HepG2 (cell line): ENCODE measurements at regions of chr16 and their contacts with region 1.

Region 1: GRCh38 chr16:50806099-50807062 is 64.5 kb downstream of the CYLD start:
- DNase-seq: peak; percentile 88
- ATAC-seq: peak; percentile 82
- H3K4me3 ChIP-seq: peak overlapping the region; percentile 24 to 60 (median 39); a peak in 5 of 6 replicates
- H3K27ac ChIP-seq: peak overlapping the region; percentile 6
- H3K4me1 ChIP-seq: peaks cover 39% of the 10 kb centered on the region
- H3K27me3 ChIP-seq: no peaks in the 10 kb centered on the region
- CTCF ChIP-seq: peak; percentile 87
- EP300 ChIP-seq: no peak
- POLR2A ChIP-seq: no peak
- RAD21 ChIP-seq: peak; percentile 81

Region 2: DNA sequence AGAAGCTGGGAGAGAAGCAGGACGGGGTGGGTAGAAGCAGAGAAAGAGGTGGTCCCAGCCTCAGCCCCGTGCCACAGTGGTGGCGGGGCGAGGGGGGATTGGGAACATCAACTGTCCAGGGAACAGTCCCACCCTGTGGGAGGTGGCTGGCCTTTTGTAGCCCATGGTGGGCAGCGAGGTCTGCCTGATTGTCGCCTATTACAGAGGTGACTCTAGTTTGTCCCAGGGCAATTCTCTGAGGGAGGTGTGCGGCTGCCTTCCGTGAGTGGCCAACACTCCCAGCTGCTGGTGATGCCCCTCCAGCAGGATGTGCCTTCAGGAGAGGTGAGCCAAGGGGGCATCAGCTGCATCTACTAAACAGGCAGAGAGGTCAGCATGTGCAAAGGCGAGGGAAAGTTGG is 432.6 kb before region 1 on chr16:
- CTCF ChIA-PET with region 1: no interaction called
- POLR2A ChIA-PET with region 1: interaction called, 4 read pairs
- in situ Hi-C with region 1: loop called (anchors 5 kb)
- intact Hi-C with region 1: loop called (anchors 2 kb)
- DNase-seq: no peak
- ATAC-seq: no peak
- H3K4me3 ChIP-seq: no peak overlapping the region
- H3K27ac ChIP-seq: no peak overlapping the region
- H3K4me1 ChIP-seq: peaks cover 61% of the 10 kb centered on the region
- H3K27me3 ChIP-seq: no peaks in the 10 kb centered on the region
- CTCF ChIP-seq: no peak
- EP300 ChIP-seq: no peak
- POLR2A ChIP-seq: no peak
- RAD21 ChIP-seq: no peak

Region 3: GRCh38 chr16:50665128-50665878 is 141.1 kb before region 1 on chr16:
- CTCF ChIA-PET with region 1: interaction called, 20 read pairs
- POLR2A ChIA-PET with region 1: interaction called, 10 read pairs
- in situ Hi-C with region 1: loop called (anchors 5 kb)
- intact Hi-C with region 1: loop called (anchors 1 kb)
- DNase-seq: peak; percentile 59
- ATAC-seq: peak; percentile 69
- H3K4me3 ChIP-seq: peak overlapping the region; percentile 57 to 76 (median 69)
- H3K27ac ChIP-seq: no peak overlapping the region
- H3K4me1 ChIP-seq: peaks cover 39% of the 10 kb centered on the region
- H3K27me3 ChIP-seq: no peaks in the 10 kb centered on the region
- CTCF ChIP-seq: peak; percentile 91
- EP300 ChIP-seq: no peak
- POLR2A ChIP-seq: 0 out of 4 replicates have a peak, but pooled peaks of 1 of the 2 experiments have one; percentile 15
- RAD21 ChIP-seq: peak; percentile 92

Region 4: GRCh38 chr16:50671644-50672260 is 134.6 kb before region 1 on chr16:
- CTCF ChIA-PET with region 1: interaction called, 20 read pairs
- POLR2A ChIA-PET with region 1: interaction called, 8 read pairs
- in situ Hi-C with region 1: loop called (anchors 5 kb)
- intact Hi-C with region 1: loop called (anchors 1 kb)
- DNase-seq: peak; percentile 36
- ATAC-seq: no peak
- H3K4me3 ChIP-seq: no peak overlapping the region
- H3K27ac ChIP-seq: no peak overlapping the region
- H3K4me1 ChIP-seq: peaks cover 26% of the 10 kb centered on the region
- H3K27me3 ChIP-seq: no peaks in the 10 kb centered on the region; a peak in 1 of 5 replicates
- CTCF ChIP-seq: peak; percentile 67
- EP300 ChIP-seq: no peak
- POLR2A ChIP-seq: no peak
- RAD21 ChIP-seq: no peak

Region 5: DNA sequence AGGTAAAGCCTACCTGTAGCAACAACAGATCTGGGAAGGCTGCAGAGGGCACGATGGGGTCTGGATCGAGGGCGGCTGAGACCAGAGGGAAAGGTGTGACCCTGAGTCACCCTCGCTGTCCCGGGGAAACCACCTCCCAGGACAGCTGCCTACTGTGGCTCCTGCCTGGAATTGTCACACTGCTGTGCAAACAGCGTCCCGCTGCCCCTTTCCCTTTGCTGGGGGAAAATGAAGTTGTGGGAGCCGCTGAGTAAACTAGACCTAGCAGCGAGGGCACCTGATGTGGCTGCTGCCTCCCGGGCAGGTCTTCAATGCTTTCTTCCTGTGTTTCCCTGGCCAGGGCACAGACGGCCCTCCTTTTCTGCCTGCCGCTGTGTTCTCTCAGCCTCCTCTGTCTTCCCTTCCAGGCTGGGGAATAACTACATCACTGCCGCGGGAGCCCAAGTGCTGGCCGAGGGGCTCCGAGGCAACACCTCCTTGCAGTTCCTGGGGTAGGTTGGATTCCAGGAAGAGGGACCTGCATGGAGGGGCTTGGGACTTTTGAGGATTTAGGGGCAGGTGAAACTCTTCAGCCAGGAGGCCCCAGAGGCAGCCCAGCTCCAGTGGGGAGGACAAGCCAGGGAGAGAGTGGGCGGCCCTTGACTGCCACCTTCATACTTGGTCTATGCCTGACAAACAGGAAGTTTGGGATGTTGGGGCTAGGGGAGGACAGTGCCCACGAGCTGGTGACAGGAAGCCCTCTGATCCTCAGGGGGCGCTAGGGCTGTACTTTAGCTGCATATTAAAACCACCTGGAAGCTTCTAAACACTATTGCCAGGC is 86.7 kb before region 1 on chr16:
- CTCF ChIA-PET with region 1: interaction called, 16 read pairs
- POLR2A ChIA-PET with region 1: interaction called, 12 read pairs
- in situ Hi-C with region 1: no loop called
- intact Hi-C with region 1: loop called (anchors 1 kb)
- DNase-seq: peak; percentile 65
- ATAC-seq: peak; percentile 92
- H3K4me3 ChIP-seq: peak overlapping the region; percentile 59 to 71 (median 66)
- H3K27ac ChIP-seq: peak overlapping the region; percentile 9
- H3K4me1 ChIP-seq: peaks cover 42% of the 10 kb centered on the region
- H3K27me3 ChIP-seq: peaks cover 1 to 6% of the 10 kb centered on the region in 2 experiments; a peak in 1 of 5 replicates
- CTCF ChIP-seq: peak; percentile 72
- EP300 ChIP-seq: no peak
- POLR2A ChIP-seq: no peak
- RAD21 ChIP-seq: no peak; the same call in 1 of the 2 replicates

Region 6: GRCh38 chr16:50741808-50742575 is 64.4 kb before region 1 on chr16 and contains the start of gene CYLD:
- CTCF ChIA-PET with region 1: interaction called, 7 read pairs
- POLR2A ChIA-PET with region 1: interaction called, 4 read pairs
- in situ Hi-C with region 1: no loop called
- intact Hi-C with region 1: loop called (anchors 1 kb)
- DNase-seq: peak; percentile 99
- ATAC-seq: peak; percentile 98
- H3K4me3 ChIP-seq: peak within 1 kb of the TSS; percentile 77 to 94 (median 86)
- H3K27ac ChIP-seq: no peak within 1 kb of the TSS
- H3K4me1 ChIP-seq: peaks cover 19% of the 10 kb centered on the region
- H3K27me3 ChIP-seq: 0 out of 5 replicates have a peak, but pooled peaks cover 0 to 5% of the 10 kb centered on the region in 2 experiments
- CTCF ChIP-seq: no peak
- EP300 ChIP-seq: no peak
- POLR2A ChIP-seq: no peak; a peak in 1 of 4 replicates
- RAD21 ChIP-seq: 0 out of 2 replicates have a peak, but pooled peaks have one; percentile 26
- total RNA-seq, gene CYLD: 11.4 and 16.0 TPM in 2 replicates

Region 7: GRCh38 chr16:50747207-50747956 is 59.0 kb before region 1 on chr16:
- CTCF ChIA-PET with region 1: interaction called, 7 read pairs
- POLR2A ChIA-PET with region 1: no interaction called
- in situ Hi-C with region 1: no loop called
- intact Hi-C with region 1: loop called (anchors 2 kb)
- DNase-seq: peak; percentile 46
- ATAC-seq: peak; percentile 62
- H3K4me3 ChIP-seq: no peak overlapping the region
- H3K27ac ChIP-seq: no peak overlapping the region
- H3K4me1 ChIP-seq: peaks cover 7% of the 10 kb centered on the region
- H3K27me3 ChIP-seq: no peaks in the 10 kb centered on the region
- CTCF ChIP-seq: peak; percentile 68
- EP300 ChIP-seq: no peak
- POLR2A ChIP-seq: no peak
- RAD21 ChIP-seq: peak; percentile 58; the same call in 1 of the 2 replicates

Region 8: GRCh38 chr16:50763211-50763610 is 43.2 kb before region 1 on chr16:
- CTCF ChIA-PET with region 1: no interaction called
- POLR2A ChIA-PET with region 1: no interaction called
- in situ Hi-C with region 1: no loop called
- intact Hi-C with region 1: no loop called
- DNase-seq: no peak
- ATAC-seq: no peak
- H3K4me3 ChIP-seq: no peak overlapping the region
- H3K27ac ChIP-seq: no peak overlapping the region
- H3K4me1 ChIP-seq: no peaks in the 10 kb centered on the region
- H3K27me3 ChIP-seq: no peaks in the 10 kb centered on the region
- CTCF ChIP-seq: no peak
- EP300 ChIP-seq: no peak
- POLR2A ChIP-seq: no peak
- RAD21 ChIP-seq: no peak

Region 9: GRCh38 chr16:50789757-50790156 is 16.6 kb before region 1 on chr16:
- CTCF ChIA-PET with region 1: no interaction called
- POLR2A ChIA-PET with region 1: no interaction called
- in situ Hi-C with region 1: no loop called
- intact Hi-C with region 1: no loop called
- DNase-seq: no peak
- ATAC-seq: no peak
- H3K4me3 ChIP-seq: no peak overlapping the region
- H3K27ac ChIP-seq: no peak overlapping the region
- H3K4me1 ChIP-seq: no peaks in the 10 kb centered on the region
- H3K27me3 ChIP-seq: no peaks in the 10 kb centered on the region
- CTCF ChIP-seq: no peak
- EP300 ChIP-seq: no peak
- POLR2A ChIP-seq: no peak
- RAD21 ChIP-seq: no peak